ENCODE measurements at regions of chrX and their contacts with region 1.

Region 1: DNA sequence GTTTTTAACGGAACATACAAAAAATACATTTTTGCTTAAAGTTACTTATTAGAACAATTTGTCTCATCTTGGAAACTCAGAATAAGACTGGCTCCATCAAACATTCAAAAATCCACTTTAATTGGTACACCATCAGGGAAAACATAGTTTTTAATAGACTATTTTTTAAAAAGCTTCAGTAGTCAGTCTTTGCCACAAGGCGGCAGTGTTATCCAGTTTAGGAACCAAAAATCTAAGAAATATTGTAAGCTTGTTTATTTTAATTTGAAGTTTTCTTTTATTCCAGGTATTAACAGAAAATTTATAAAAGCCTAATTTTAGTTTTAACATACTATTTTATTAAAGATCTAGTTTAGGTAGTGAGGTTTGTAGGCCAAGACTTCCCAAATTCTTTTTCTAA is 107.7 kb downstream of the APOOL start:
- DNase-seq: no peak

Region 2: DNA sequence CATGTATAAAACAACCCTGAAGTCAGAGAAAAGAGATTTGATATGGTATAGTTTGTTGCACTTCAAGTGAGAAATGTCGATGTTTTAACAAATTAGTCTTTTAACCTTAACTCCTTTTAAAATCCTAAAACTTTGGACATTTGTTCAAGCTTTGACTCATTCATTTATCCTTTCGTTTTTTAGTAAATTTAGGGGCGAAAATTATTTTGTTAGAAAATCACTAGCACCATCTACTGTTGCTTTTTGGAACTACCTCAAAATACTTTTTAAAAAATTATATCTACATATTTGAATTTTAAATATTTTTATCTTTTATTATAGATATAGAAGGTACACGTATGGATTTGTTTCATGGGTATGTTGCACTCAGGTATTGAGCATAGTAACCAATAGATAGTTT is 433.3 kb after region 1 on chrX:
- intact Hi-C with region 1: loop called (anchors 10 kb)
- DNase-seq: no peak